ENCODE measurements at regions of chr22 and their contacts with region 1.

Region 1: DNA sequence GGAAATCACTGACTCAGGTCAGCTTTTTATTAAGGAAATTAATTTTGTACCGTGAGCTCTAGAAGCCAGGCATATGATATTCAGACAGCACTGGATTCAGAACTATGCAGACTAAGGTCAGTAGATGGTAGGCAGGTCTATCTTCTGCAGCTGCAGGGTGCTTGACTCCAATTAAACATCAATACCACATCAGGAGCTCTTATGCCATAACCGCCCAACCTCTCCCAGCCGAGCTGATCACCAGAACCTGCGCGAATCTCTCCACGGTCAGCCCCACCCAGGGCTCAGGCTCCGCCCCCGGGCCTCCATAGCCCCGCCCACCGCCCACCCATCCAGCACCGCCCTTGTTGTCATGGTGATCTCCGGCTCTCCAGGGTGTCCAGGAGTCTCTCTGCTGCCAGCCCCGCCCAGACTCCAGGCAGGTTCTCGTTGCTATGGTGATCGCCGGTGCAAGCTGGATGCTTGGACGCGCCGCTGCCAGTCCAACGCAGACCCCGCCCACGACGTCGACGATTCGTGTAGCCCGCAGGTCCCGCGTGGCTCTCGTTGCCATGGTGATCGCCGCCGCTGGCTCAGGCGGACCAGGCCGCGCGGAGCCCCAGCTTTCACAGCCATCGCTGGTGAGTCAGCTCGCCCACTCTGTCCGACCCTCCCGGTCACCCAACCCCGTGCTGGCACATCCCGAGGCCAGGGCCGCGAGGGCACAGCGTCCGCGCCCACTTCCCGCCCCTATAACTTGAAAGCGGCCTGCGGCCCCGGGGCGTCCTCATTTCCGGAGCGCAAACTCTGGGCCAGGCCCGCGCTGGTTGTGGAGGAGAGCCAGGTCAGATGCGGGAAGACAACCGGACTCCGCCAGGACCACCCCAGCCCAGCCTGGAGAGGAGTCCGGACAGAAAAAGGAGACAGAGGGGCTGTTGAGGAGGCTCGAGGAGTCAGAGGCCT is at the start of gene RAB36:
- DNase-seq: peak; percentile 97 to 99
- H3K4me3 ChIP-seq: peak within 1 kb of the TSS; percentile 30 to 51
- H3K27ac ChIP-seq: peak within 1 kb of the TSS; percentile 17 to 82
- H3K4me1 ChIP-seq: no peaks in the 10 kb centered on the region
- H3K27me3 ChIP-seq: no peaks in the 10 kb centered on the region
- CTCF ChIP-seq: no peak
- POLR2A ChIP-seq: peak in 1 of 2 donors; percentile 28
- total RNA-seq, gene RAB36: 8.8 to 28.7 (median 14.7) TPM

Region 2: DNA sequence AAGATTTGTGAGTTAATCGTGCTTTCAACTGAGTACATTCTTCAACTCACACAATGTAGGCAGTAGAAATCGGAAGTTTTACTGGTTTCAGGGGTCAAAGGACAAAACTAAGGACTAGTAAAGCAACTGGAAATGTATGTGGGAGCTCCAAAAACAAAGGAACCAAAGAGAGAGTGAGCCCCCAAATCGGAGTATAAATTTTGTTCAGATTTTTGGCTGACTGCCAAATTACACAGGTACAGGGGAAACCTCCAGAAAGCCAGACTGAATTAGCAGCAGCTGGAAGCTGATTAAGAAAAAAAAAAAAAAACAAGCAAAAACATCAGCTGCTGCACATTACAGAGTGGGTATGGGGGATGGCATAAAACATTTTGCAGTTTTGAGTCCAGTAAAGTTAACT is 150.0 kb before region 1 on chr22:
- intact Hi-C with region 1: no loop called
- DNase-seq: no peak
- H3K4me3 ChIP-seq: no peak overlapping the region
- H3K27ac ChIP-seq: no peak overlapping the region
- H3K4me1 ChIP-seq: no peaks in the 10 kb centered on the region
- H3K27me3 ChIP-seq: no peaks in the 10 kb centered on the region
- CTCF ChIP-seq: no peak
- POLR2A ChIP-seq: no peak

Region 3: GRCh38 chr22:23069502-23070357 is 75.5 kb before region 1 on chr22:
- intact Hi-C with region 1: loop called (anchors 10 kb)
- DNase-seq: peak; percentile 89 to 90
- H3K4me3 ChIP-seq: peak overlapping the region; percentile 35 to 48
- H3K27ac ChIP-seq: no peak overlapping the region
- H3K4me1 ChIP-seq: peaks cover 0 to 3% of the 10 kb centered on the region in 2 donors
- H3K27me3 ChIP-seq: no peaks in the 10 kb centered on the region
- CTCF ChIP-seq: peak in 2 of 4 experiments; percentile 32 to 51
- POLR2A ChIP-seq: no peak

Measured in uterus (tissue), 4 donors.